HEK293 (cell line): ENCODE measurements at regions of chr7 and their contacts with region 1.

Region 1: DNA sequence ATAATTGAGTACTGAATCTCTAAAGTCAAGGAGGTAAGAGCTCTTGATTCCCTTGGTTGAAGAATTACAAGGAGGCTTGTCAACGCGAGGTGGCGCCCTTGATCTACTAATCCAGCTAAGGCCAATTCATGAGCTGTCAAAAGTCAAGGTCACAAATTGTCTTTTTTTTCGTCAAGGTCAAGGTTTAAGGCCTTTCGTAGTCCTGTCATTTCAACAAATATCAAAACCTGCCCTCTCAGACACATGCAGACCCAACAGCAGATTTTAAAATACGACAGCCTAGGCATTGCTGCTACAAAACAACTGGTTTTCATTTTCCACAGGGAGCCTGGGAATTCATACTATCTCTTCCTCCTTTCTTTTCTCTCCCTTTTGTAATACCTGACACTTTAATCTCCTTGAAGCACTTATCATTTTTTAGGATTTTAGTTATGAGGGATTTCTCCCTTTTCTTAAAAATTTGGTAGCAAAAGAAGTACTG is 3.6 kb downstream of the HOXA13 start:
- H3K4me3 ChIP-seq: peak overlapping the region; percentile 89
- H3K27ac ChIP-seq: no peak overlapping the region
- H3K4me1 ChIP-seq: peaks cover 17% of the 10 kb centered on the region
- CTCF ChIP-seq: peak; percentile 71

Region 2: DNA sequence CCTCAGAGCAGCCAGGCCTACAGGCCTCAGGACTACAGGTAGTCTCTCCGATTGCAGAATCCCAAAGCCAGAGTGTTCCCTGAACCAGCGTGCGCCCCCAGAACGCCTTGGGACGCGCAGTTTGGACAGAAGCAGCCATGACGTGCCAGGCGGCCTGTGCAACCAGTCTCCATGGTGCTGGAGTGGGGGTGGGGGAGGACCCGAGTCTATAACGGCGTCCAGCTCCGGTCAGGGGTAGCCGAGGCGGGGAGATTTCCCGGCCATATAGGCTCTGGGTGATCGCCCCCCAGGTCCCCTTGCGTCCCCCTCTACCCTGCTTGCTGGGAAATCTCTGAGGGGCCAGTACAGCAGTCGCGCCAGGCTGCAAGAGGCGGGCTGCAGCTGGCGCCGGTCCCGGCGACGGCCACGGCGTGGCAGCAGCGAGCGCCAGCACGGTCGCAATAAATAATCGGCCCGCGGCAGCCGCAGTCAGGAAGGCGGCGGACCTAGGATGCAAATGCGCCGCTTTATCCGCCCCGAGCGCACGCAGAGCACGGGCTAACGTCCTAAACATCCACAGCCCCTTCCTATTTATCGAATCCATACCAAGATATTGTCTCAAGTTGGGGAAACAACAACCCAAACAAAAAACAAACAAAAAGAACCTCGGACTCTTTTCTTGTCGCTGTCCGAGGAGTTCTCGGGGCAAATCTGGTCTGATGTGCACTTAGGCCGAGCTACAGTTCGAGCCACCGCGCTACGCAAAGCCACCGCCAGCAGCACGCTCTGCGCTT is 45.6 kb before region 1 on chr7:
- CTCF ChIA-PET with region 1: no interaction called
- POLR2A ChIA-PET with region 1: no interaction called
- H3K4me3 ChIP-seq: peak overlapping the region; percentile 59
- H3K27ac ChIP-seq: peak overlapping the region; percentile 99
- H3K4me1 ChIP-seq: peaks cover 11% of the 10 kb centered on the region
- CTCF ChIP-seq: peak; percentile 87

Region 3: GRCh38 chr7:27179503-27180430 is 16.6 kb before region 1 on chr7:
- CTCF ChIA-PET with region 1: interaction called, 26 read pairs
- POLR2A ChIA-PET with region 1: interaction called, 36 read pairs
- H3K4me3 ChIP-seq: peak overlapping the region; percentile 76
- H3K27ac ChIP-seq: peak overlapping the region; percentile 99
- H3K4me1 ChIP-seq: peaks cover 36% of the 10 kb centered on the region
- CTCF ChIP-seq: peak; percentile 83

Region 4: GRCh38 chr7:27576360-27576944 is 380.1 kb after region 1 on chr7:
- CTCF ChIA-PET with region 1: interaction called, 23 read pairs
- POLR2A ChIA-PET with region 1: no interaction called
- H3K4me3 ChIP-seq: no peak overlapping the region
- H3K27ac ChIP-seq: no peak overlapping the region
- H3K4me1 ChIP-seq: no peaks in the 10 kb centered on the region
- CTCF ChIP-seq: no peak

Region 5: GRCh38 chr7:27745064-27745583 is 548.8 kb after region 1 on chr7:
- CTCF ChIA-PET with region 1: interaction called, 10 read pairs
- POLR2A ChIA-PET with region 1: interaction called, 4 read pairs
- H3K4me3 ChIP-seq: no peak overlapping the region
- H3K27ac ChIP-seq: no peak overlapping the region
- H3K4me1 ChIP-seq: peaks cover 9% of the 10 kb centered on the region
- CTCF ChIP-seq: no peak; the same call in 1 of the 2 replicates

Region 6: DNA sequence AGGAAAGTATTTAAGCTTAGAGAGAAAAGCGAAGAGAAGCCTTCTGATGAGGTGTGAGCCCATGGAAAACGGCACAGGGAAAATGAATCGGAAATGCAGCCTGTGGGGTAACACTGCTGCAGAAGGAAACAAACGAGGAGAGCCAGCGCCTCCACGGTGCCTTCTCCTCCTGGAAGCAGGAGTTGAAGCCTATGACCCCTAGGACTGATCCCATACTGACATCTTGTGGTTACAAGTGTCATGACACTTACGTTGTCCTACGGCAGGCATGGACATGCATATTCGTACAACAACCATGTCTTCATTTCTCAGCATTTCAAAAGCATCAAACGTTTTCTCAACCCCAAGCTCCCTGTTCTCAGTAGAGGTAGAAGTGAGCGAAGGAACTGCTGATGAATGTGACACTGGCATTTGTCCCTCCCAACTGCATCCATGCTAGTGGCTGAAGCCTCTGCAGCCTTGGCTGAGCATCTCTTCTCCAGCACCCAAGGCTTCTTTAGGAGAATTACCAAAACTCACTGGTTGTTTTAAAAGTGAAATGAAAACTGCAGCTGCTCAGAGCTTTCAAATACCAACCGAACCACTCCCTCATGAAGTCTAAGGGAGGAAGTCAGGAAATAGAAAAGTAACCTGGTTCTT is 824.1 kb after region 1 on chr7:
- CTCF ChIA-PET with region 1: interaction called, 15 read pairs
- POLR2A ChIA-PET with region 1: no interaction called
- H3K4me3 ChIP-seq: no peak overlapping the region
- H3K27ac ChIP-seq: no peak overlapping the region
- H3K4me1 ChIP-seq: peaks cover 5% of the 10 kb centered on the region; the same call in 1 of the 2 replicates
- CTCF ChIP-seq: peak; percentile 91